ENCODE measurements at regions of chr22 and their contacts with region 1.

Region 1: GRCh38 chr22:30005213-30005857 is 74.9 kb upstream of the HORMAD2 start:
- DNase-seq: peak; percentile 57
- CTCF ChIP-seq: peak; percentile 97

Region 2: GRCh38 chr22:29635734-29636357 is 369.5 kb before region 1 on chr22:
- CTCF ChIA-PET with region 1: interaction called, 27 read pairs
- POLR2A ChIA-PET with region 1: no interaction called
- DNase-seq: peak; percentile 39
- CTCF ChIP-seq: peak; percentile 58

Region 3: DNA sequence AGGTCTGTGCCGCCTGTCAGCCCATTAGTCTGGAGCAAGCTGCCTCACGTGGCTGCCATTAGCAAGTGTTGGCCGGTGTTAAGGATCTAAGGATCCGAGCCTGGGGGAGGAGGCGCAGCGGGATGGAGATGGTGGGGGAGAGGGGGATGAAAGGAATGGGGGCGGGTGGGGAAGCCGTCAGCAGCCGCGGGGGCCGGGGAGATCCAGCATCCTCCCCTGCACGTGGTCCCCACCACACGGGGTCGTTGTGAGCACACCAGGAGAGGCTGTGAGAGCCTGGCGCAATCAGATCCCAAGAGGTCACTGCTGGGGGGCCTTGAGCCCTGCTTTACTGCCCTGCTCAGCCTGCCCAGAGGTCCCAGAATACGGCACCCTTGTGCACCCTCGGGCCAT is 278.2 kb before region 1 on chr22:
- CTCF ChIA-PET with region 1: interaction called, 11 read pairs
- POLR2A ChIA-PET with region 1: no interaction called
- DNase-seq: peak; percentile 71
- CTCF ChIP-seq: peak; percentile 41

Region 4: DNA sequence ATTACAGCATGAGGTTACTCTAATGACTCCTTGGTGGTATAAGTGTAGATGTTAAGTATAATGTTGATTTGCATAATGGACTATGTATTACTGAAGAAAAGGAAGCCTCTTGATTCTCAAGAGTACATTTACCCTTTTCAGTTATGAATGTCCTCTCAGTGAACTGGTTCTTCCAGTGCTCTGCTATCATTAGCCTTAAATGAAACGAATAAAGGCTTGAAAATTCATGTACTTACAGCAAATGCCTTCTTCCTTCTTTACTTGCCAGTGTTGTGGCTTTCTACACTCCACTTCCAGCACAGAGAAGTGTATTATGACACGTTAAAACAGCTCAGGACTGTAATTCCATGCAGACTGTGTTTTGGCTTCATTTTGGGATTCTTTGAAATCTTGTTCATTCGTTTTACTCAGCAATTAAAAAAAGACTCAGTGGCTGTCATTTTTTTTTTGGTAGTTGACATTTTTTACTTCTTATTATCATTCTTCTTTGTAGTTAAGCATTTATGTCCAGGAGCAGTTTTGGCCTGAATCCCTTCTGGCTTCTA is 25.5 kb before region 1 on chr22:
- CTCF ChIA-PET with region 1: interaction called, 37 read pairs
- POLR2A ChIA-PET with region 1: no interaction called
- DNase-seq: peak; percentile 41
- CTCF ChIP-seq: no peak

Region 5: GRCh38 chr22:30015846-30016245 is 10.5 kb after region 1 on chr22:
- CTCF ChIA-PET with region 1: interaction called, 86 read pairs
- POLR2A ChIA-PET with region 1: no interaction called
- DNase-seq: no peak
- CTCF ChIP-seq: no peak

Region 6: DNA sequence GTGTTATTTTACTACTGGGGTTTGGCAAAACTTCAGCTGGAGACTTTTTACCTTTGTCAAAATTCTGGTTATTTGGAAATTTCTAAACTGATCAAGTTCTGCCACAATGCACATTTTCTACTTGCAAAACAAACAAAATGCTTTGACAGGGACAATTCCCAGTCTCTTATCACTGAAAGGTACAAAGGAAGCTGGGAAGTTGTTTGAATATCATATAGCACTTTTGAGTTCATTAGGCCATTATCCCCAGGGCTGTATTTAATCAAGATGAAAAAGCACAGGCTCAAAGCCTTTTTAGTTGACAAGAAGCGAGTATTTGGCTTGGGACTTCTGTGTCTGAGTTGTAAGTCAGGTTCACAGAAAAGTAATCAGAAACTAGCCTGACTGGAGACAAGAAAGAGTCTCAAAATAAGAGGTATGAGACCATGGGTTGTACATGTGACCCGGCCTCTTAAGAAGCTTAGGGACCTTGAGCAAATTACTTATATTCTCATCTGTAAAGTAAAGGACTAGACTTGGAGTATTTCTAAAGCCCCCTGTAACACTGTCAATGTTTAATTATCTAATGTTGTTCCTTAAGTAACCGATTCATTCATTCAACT is 72.0 kb after region 1 on chr22:
- CTCF ChIA-PET with region 1: no interaction called
- POLR2A ChIA-PET with region 1: no interaction called
- DNase-seq: no peak
- CTCF ChIP-seq: no peak